ENCODE measurements at regions of chr12 and their contacts with region 1.

Region 1: GRCh38 chr12:5511644-5512600 is 80.0 kb downstream of the NTF3 start:
- DNase-seq: peak; percentile 74 to 91
- ATAC-seq: peak; percentile 69
- H3K4me3 ChIP-seq: no peak overlapping the region
- H3K27ac ChIP-seq: no peak overlapping the region
- H3K4me1 ChIP-seq: no peaks in the 10 kb centered on the region
- H3K27me3 ChIP-seq: no peaks in the 10 kb centered on the region

Region 2: GRCh38 chr12:5200278-5201087 is 311.4 kb before region 1 on chr12:
- intact Hi-C with region 1: loop called in 1 of 2 experiments (anchors 10 kb)
- DNase-seq: peak; percentile 54 to 87
- ATAC-seq: peak; percentile 73
- H3K4me3 ChIP-seq: no peak overlapping the region
- H3K27ac ChIP-seq: no peak overlapping the region
- H3K4me1 ChIP-seq: no peaks in the 10 kb centered on the region
- H3K27me3 ChIP-seq: no peaks in the 10 kb centered on the region

Region 3: GRCh38 chr12:5648692-5649359 is 136.9 kb after region 1 on chr12:
- intact Hi-C with region 1: loop called in 1 of 2 experiments (anchors 5 kb)
- DNase-seq: no peak
- ATAC-seq: peak; percentile 60
- H3K4me3 ChIP-seq: no peak overlapping the region
- H3K27ac ChIP-seq: no peak overlapping the region
- H3K4me1 ChIP-seq: no peaks in the 10 kb centered on the region
- H3K27me3 ChIP-seq: no peaks in the 10 kb centered on the region

Measured in aorta (tissue), 5 donors.